Activated naive CD8-positive, alpha-beta T cell treated with anti-CD3 and anti-CD28 coated beads, Interleukin-2, amount 10 ng/mL, durations not matched to agents 7 days and 5 days (primary cell): ENCODE measurements at regions of chr7 and their contacts with region 1.

Region 1: DNA sequence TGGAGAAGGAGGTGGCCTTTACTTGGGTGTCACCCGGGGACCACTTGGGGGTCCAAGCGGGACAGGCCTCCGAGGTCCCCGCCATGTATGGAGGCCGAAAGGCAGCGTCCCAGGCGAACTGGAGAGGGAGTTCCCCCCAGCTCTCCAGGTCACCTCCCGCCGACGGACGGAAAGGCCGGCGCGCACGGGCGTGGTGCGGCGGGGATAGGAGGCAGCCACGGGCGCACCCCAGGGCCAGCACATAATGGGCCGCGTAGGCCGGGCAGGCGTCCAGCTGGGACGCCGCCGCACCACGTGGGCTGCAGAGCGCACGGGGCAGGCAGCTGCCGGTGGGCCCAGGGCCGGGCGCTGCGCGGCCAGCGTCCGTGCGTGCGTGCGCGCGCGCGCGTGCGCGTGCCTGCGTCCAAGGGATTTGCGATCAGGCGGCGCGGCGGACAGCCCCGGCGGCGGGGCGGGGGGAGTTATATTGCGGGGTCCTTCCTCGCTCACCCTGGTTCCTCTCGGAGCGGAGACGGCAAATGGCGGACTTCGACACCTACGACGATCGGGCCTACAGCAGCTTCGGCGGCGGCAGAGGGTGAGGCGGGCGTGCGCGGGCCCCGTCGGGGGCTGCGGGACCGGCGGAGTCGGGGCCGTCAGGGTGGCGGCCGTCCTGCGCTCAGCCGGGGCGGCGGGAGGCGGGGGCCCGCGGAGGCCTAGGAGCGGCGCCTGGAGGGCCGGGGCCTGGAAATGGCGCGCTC is at the start of gene EIF4H:
- DNase-seq: peak; percentile 99
- ATAC-seq: peak; percentile 85
- H3K4me3 Mint-ChIP-seq: peak within 1 kb of the TSS; percentile 89
- H3K27ac Mint-ChIP-seq: peak within 1 kb of the TSS; percentile 88
- H3K4me1 Mint-ChIP-seq: peaks cover 35% of the 10 kb centered on the region
- H3K27me3 Mint-ChIP-seq: no peaks in the 10 kb centered on the region
- total RNA-seq, gene EIF4H: 264 to 270 TPM

Region 2: GRCh38 chr7:74002474-74003017 is 171.5 kb before region 1 on chr7:
- POLR2A ChIA-PET with region 1: no interaction called
- DNase-seq: peak; percentile 49
- ATAC-seq: peak; percentile 79
- H3K4me3 Mint-ChIP-seq: peak overlapping the region; percentile 53
- H3K27ac Mint-ChIP-seq: peak overlapping the region; percentile 62
- H3K4me1 Mint-ChIP-seq: peaks cover 16% of the 10 kb centered on the region
- H3K27me3 Mint-ChIP-seq: peaks cover 7% of the 10 kb centered on the region

Region 3: GRCh38 chr7:74083117-74083876 is 90.7 kb before region 1 on chr7 and contains the start of gene LIMK1:
- POLR2A ChIA-PET with region 1: interaction called, 24 read pairs
- DNase-seq: peak; percentile 92
- ATAC-seq: peak; percentile 76
- H3K4me3 Mint-ChIP-seq: peak within 1 kb of the TSS; percentile 83
- H3K27ac Mint-ChIP-seq: peak within 1 kb of the TSS; percentile 85
- H3K4me1 Mint-ChIP-seq: peaks cover 11% of the 10 kb centered on the region
- H3K27me3 Mint-ChIP-seq: peaks cover 2% of the 10 kb centered on the region
- total RNA-seq, gene LIMK1: 33.3 to 36.2 TPM

Region 4: DNA sequence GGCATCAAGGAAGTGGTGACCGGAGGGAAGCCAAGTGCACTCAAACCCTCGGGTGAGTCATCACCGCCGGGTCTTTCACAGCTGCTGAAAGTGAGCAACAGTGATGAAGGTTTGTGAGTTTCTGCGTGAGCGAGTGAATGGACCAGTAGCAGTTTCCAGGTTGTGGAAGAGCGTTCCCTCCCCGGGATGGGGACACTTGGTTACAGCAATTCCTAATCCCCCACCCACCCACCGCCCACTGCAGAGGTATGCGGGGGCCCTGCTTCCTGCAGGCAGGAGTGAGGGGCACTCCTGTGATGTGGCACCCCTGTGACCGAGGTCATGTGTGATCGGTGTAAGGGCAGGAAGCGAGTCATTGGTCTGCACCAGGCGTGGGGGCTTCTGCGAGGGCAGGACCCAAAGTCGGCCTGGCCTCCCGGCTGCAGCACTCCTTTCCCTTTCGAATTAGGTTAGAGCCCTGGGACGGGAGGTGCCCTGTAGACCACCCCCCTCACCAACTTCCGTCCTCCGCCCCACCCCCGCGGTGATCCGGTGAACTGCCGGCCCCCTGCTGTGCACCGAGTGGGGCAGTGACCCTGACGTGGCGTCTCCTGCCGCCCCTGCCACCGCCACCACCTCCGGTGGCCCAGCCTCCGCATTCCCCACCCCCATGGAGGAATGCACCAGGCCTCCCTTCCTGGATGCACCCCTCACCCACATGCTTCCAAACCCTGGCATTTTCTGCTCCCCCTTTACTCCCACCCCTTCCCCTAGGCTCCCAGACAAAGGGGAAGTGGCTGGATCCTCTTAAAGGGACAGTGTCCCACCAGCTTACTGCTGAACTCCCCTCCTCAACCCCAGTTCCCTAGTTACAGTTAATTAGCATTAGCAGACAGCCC is 79.6 kb before region 1 on chr7:
- POLR2A ChIA-PET with region 1: interaction called, 15 read pairs
- DNase-seq: peak; percentile 79
- ATAC-seq: peak; percentile 83
- H3K4me3 Mint-ChIP-seq: peak overlapping the region; percentile 91
- H3K27ac Mint-ChIP-seq: peak overlapping the region; percentile 97
- H3K4me1 Mint-ChIP-seq: peaks cover 22% of the 10 kb centered on the region
- H3K27me3 Mint-ChIP-seq: no peaks in the 10 kb centered on the region

Region 5: GRCh38 chr7:74141705-74142104 is 32.3 kb before region 1 on chr7:
- POLR2A ChIA-PET with region 1: interaction called, 16 read pairs
- DNase-seq: no peak
- ATAC-seq: peak; percentile 85
- H3K4me3 Mint-ChIP-seq: peak overlapping the region; percentile 47
- H3K27ac Mint-ChIP-seq: peak overlapping the region; percentile 54
- H3K4me1 Mint-ChIP-seq: peaks cover 3% of the 10 kb centered on the region
- H3K27me3 Mint-ChIP-seq: peaks cover 4% of the 10 kb centered on the region